ENCODE measurements at regions of chr12 and their contacts with region 1.

Region 1: GRCh38 chr12:46303039-46303666 is 34.3 kb upstream of the SLC38A1 start:
- DNase-seq: peak; percentile 51
- ATAC-seq: peak; percentile 57
- H3K4me3 Mint-ChIP-seq: no peak overlapping the region
- H3K27ac Mint-ChIP-seq: no peak overlapping the region
- H3K4me1 Mint-ChIP-seq: no peaks in the 10 kb centered on the region
- H3K27me3 Mint-ChIP-seq: no peaks in the 10 kb centered on the region

Region 2: GRCh38 chr12:46124848-46125619 is 178.1 kb before region 1 on chr12:
- CTCF ChIA-PET with region 1: interaction called, 25 read pairs
- DNase-seq: peak; percentile 71
- ATAC-seq: peak; percentile 95
- H3K4me3 Mint-ChIP-seq: peak overlapping the region; percentile 52
- H3K27ac Mint-ChIP-seq: peak overlapping the region; percentile 75
- H3K4me1 Mint-ChIP-seq: peaks cover 5% of the 10 kb centered on the region
- H3K27me3 Mint-ChIP-seq: peaks cover 31% of the 10 kb centered on the region

Region 3: DNA sequence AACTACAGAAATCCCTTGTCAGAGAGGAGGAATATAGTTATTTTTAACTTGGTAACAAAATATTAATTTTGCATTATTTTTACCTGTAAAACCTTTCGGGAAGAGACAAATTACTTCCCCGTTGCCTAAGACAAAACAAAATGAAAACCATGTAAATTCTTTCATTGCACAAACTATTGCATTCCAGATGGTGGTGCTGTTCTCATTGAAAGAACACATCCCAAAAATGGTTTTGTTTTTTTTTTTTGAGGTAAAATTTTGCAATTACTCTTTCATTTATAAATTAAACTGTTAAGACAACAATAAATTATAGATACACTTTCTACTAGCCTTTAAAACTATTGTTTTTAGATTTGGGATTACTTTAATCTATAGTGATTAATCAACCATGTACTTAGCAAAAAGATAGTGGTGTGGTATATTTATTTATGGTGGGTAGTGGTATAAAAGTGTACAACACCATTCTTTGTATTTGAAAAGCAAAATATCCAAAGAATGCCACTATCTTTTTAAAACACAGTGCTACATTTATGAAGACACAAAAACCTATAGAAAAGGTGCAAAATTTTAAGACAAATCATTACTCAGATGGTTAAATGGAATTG is 149.8 kb before region 1 on chr12:
- CTCF ChIA-PET with region 1: interaction called, 17 read pairs
- DNase-seq: no peak
- ATAC-seq: no peak
- H3K4me3 Mint-ChIP-seq: no peak overlapping the region
- H3K27ac Mint-ChIP-seq: no peak overlapping the region
- H3K4me1 Mint-ChIP-seq: peaks cover 11% of the 10 kb centered on the region
- H3K27me3 Mint-ChIP-seq: peaks cover 1% of the 10 kb centered on the region

Region 4: DNA sequence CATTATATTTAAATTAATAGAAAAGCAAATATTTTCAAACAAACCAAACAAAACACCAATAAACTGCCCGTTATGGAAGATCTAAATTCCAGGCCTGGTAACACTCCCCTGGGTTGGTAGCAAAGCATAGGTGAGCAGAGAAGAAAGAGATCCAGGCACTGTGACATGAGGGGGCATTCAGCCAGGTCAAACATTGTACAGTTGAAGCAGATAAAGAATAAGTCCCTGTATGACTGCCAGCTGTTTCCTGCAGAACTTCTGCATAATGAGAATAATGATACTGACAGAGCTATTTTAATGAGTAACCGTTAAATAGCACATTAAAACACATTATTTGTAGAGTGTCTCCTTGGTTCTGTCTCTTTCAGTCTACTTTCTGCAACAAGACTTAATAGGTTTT is 69.7 kb before region 1 on chr12:
- CTCF ChIA-PET with region 1: no interaction called
- DNase-seq: no peak
- ATAC-seq: no peak
- H3K4me3 Mint-ChIP-seq: no peak overlapping the region
- H3K27ac Mint-ChIP-seq: no peak overlapping the region
- H3K4me1 Mint-ChIP-seq: peaks cover 49% of the 10 kb centered on the region
- H3K27me3 Mint-ChIP-seq: no peaks in the 10 kb centered on the region